PC-9 (cell line): ENCODE measurements at regions of chr20 and their contacts with region 1.

Region 1: GRCh38 chr20:49318430-49319207 is 40.8 kb upstream of the ZNFX1 start:
- DNase-seq: no peak
- H3K4me3 ChIP-seq: no peak overlapping the region
- H3K27ac ChIP-seq: no peak overlapping the region
- H3K4me1 ChIP-seq: no peaks in the 10 kb centered on the region
- H3K27me3 ChIP-seq: peaks cover 2% of the 10 kb centered on the region; the same call in 1 of the 2 replicates
- CTCF ChIP-seq: no peak

Region 2: GRCh38 chr20:48999890-49000870 is 318.4 kb before region 1 on chr20:
- CTCF ChIA-PET with region 1: no interaction called
- POLR2A ChIA-PET with region 1: no interaction called
- intact Hi-C with region 1: no loop called
- DNase-seq: no peak
- H3K4me3 ChIP-seq: no peak overlapping the region
- H3K27ac ChIP-seq: no peak overlapping the region
- H3K4me1 ChIP-seq: no peaks in the 10 kb centered on the region
- H3K27me3 ChIP-seq: no peaks in the 10 kb centered on the region
- CTCF ChIP-seq: no peak

Region 3: DNA sequence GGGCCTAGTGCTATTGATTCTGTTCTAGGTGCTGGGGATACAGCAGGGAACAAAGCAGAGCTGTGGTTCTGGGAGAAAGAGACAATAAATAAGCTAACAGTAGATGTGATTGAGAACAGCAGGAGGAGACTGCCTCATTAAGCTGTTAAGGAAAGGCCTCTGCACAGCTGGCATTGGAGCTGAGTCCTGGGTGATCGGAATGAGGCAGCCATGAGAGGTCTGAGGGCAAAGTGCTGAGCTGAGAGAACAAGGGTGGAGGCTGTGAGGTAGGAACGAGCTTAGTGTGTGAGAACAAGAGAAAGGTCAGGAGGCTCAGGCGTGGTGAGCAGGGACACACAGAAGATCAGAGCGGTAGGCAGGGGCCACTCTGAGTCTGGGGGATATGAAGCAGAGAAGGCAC is 81.1 kb before region 1 on chr20:
- CTCF ChIA-PET with region 1: no interaction called
- POLR2A ChIA-PET with region 1: interaction called, 10 read pairs
- intact Hi-C with region 1: no loop called
- DNase-seq: no peak
- H3K4me3 ChIP-seq: no peak overlapping the region
- H3K27ac ChIP-seq: no peak overlapping the region
- H3K4me1 ChIP-seq: no peaks in the 10 kb centered on the region
- H3K27me3 ChIP-seq: no peaks in the 10 kb centered on the region
- CTCF ChIP-seq: no peak

Region 4: DNA sequence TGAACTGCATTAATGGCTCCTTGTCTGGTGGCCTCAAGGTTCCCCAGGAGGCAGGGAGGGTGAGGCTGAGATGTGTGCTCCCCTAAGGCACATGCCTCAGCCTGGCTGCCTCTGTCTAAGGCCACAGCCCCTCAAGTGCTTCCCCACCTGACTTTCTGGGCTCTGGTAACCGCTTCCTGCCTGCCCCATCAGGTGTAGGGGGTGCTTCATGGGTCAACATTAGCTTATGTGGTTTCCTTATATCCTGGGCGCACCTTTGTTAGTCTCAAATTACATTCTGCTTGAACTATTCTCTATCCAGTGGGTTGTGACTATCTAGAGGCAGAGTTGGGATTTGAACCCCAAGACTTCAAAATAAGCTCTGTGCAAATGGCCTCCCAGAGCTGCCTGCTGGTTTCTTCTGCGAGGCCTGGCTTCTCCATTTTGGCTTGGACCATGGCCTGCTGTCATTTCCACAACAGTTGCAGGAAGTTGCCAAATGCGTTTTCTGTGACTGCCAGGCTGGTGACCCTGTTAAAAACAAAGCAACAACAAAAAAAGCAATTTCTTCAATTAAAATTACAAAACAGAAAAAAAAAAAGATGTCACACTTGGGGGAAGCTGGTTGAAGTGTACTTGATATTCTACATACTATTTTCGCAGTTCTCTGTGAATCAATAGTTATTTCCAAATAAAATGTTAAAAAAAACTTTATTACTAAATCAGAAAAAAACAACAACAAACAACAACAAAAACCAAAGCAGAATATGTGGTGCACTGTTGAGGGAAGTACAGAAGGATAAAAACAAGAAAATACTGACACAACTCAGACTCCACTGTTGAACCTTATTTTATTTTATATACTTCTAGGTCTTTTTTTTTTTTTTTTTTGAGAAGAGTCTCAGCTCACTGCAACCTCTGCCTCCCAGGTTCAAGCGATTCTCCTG is 20.8 kb before region 1 on chr20:
- CTCF ChIA-PET with region 1: no interaction called
- POLR2A ChIA-PET with region 1: interaction called, 11 read pairs
- intact Hi-C with region 1: no loop called
- DNase-seq: no peak
- H3K4me3 ChIP-seq: no peak overlapping the region
- H3K27ac ChIP-seq: no peak overlapping the region
- H3K4me1 ChIP-seq: peaks cover 10% of the 10 kb centered on the region
- H3K27me3 ChIP-seq: no peaks in the 10 kb centered on the region
- CTCF ChIP-seq: no peak